GM12878 (cell line): ENCODE measurements at regions of chr11 and their contacts with region 1.

Region 1: GRCh38 chr11:60265373-60266214 is 14.9 kb upstream of the MS4A4A start:
- DNase-seq: peak; percentile 44
- ATAC-seq: peak; percentile 76
- H3K4me3 ChIP-seq: no peak overlapping the region
- H3K27ac ChIP-seq: no peak overlapping the region
- H3K4me1 ChIP-seq: no peaks in the 10 kb centered on the region
- H3K27me3 ChIP-seq: no peaks in the 10 kb centered on the region
- CTCF ChIP-seq: peak; percentile 49 to 80 (median 74); a peak in 5 of 6 replicates
- EP300 ChIP-seq: no peak
- POLR2A ChIP-seq: no peak
- RAD21 ChIP-seq: peak; percentile 96

Region 2: DNA sequence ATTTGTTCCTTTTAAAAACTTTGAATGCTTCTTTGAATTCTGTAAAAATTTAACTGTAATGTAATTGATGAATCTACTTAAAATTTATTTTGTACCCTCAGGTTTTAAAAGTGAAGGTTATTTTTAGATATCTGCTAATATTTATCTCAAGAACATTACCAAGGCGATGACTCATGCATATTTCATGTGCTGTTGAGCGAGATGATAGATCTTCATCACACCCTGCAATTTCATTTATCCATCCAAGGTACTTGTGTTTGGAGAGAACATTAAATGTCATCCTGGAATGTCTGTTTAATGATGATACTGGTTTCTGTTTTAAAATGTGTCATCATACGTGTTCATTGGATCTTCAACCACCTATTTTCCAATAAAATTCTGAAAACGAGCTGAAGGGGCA is 308.5 kb before region 1 on chr11:
- CTCF ChIA-PET with region 1: no interaction called
- POLR2A ChIA-PET with region 1: no interaction called
- RAD21 ChIA-PET with region 1: no interaction called
- SMC1A ChIA-PET with region 1: no interaction called
- in situ Hi-C with region 1: no loop called
- intact Hi-C with region 1: no loop called
- DNase-seq: no peak
- ATAC-seq: no peak
- H3K4me3 ChIP-seq: no peak overlapping the region
- H3K27ac ChIP-seq: no peak overlapping the region
- H3K4me1 ChIP-seq: no peaks in the 10 kb centered on the region
- H3K27me3 ChIP-seq: no peaks in the 10 kb centered on the region
- CTCF ChIP-seq: no peak
- EP300 ChIP-seq: no peak
- POLR2A ChIP-seq: no peak
- RAD21 ChIP-seq: no peak

Region 3: GRCh38 chr11:60303661-60304060 is 38.1 kb after region 1 on chr11:
- CTCF ChIA-PET with region 1: interaction called, 16 read pairs
- POLR2A ChIA-PET with region 1: no interaction called
- RAD21 ChIA-PET with region 1: interaction called, 11 read pairs
- SMC1A ChIA-PET with region 1: interaction called, 11 read pairs
- in situ Hi-C with region 1: no loop called
- intact Hi-C with region 1: no loop called
- DNase-seq: no peak
- ATAC-seq: no peak
- H3K4me3 ChIP-seq: no peak overlapping the region
- H3K27ac ChIP-seq: no peak overlapping the region
- H3K4me1 ChIP-seq: peaks cover 2% of the 10 kb centered on the region; the same call in 1 of the 2 replicates
- H3K27me3 ChIP-seq: no peaks in the 10 kb centered on the region
- CTCF ChIP-seq: no peak
- EP300 ChIP-seq: no peak
- POLR2A ChIP-seq: no peak
- RAD21 ChIP-seq: no peak

Region 4: DNA sequence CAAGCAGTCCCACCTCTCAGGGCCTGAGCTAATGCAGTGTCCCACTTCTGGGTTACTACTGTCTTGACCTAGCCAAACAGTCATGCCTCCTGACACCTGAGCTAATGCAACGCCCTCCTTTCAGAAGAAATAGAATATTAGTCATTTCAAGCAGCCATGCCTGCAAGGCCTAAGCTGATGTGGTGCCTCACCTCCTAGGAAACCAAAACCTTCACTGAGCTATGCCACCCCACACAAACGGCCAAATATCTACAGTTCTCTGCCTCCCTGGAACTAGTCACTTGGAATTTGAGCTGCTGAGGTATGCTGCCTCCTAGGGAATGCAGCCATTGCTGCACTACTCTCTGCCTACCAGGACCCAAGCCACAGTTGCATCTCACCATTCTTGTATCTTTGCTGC is 53.1 kb after region 1 on chr11:
- CTCF ChIA-PET with region 1: interaction called, 6 read pairs
- POLR2A ChIA-PET with region 1: no interaction called
- RAD21 ChIA-PET with region 1: interaction called, 3 read pairs
- SMC1A ChIA-PET with region 1: interaction called, 17 read pairs
- in situ Hi-C with region 1: no loop called
- intact Hi-C with region 1: no loop called
- DNase-seq: no peak
- ATAC-seq: peak; percentile 73
- H3K4me3 ChIP-seq: no peak overlapping the region
- H3K27ac ChIP-seq: no peak overlapping the region
- H3K4me1 ChIP-seq: peaks cover 24% of the 10 kb centered on the region; the same call in 1 of the 2 replicates
- H3K27me3 ChIP-seq: no peaks in the 10 kb centered on the region
- CTCF ChIP-seq: no peak
- EP300 ChIP-seq: no peak
- POLR2A ChIP-seq: no peak
- RAD21 ChIP-seq: no peak

Region 5: GRCh38 chr11:60345489-60345888 is 79.9 kb after region 1 on chr11:
- CTCF ChIA-PET with region 1: interaction called, 200 read pairs
- POLR2A ChIA-PET with region 1: no interaction called
- RAD21 ChIA-PET with region 1: interaction called, 83 read pairs
- SMC1A ChIA-PET with region 1: interaction called, 116 read pairs
- in situ Hi-C with region 1: no loop called
- intact Hi-C with region 1: loop called (anchors 1 kb)
- DNase-seq: no peak
- ATAC-seq: peak; percentile 87
- H3K4me3 ChIP-seq: no peak overlapping the region
- H3K27ac ChIP-seq: no peak overlapping the region
- H3K4me1 ChIP-seq: peaks cover 11% of the 10 kb centered on the region
- H3K27me3 ChIP-seq: no peaks in the 10 kb centered on the region
- CTCF ChIP-seq: peak; percentile 63 to 68 (median 66)
- EP300 ChIP-seq: no peak
- POLR2A ChIP-seq: no peak
- RAD21 ChIP-seq: peak; percentile 64

Region 6: GRCh38 chr11:60485986-60486385 is 220.4 kb after region 1 on chr11:
- CTCF ChIA-PET with region 1: interaction called, 21 read pairs
- POLR2A ChIA-PET with region 1: no interaction called
- RAD21 ChIA-PET with region 1: interaction called, 8 read pairs
- SMC1A ChIA-PET with region 1: interaction called, 13 read pairs
- in situ Hi-C with region 1: loop called (anchors 5 kb)
- intact Hi-C with region 1: loop called (anchors 1 kb)
- DNase-seq: peak; percentile 86
- ATAC-seq: peak; percentile 100
- H3K4me3 ChIP-seq: no peak overlapping the region
- H3K27ac ChIP-seq: no peak overlapping the region
- H3K4me1 ChIP-seq: peaks cover 9% of the 10 kb centered on the region
- H3K27me3 ChIP-seq: no peaks in the 10 kb centered on the region
- CTCF ChIP-seq: peak; percentile 91 to 100 (median 99); a peak in 5 of 6 replicates
- EP300 ChIP-seq: no peak
- POLR2A ChIP-seq: no peak
- RAD21 ChIP-seq: peak; percentile 93

Region 7: DNA sequence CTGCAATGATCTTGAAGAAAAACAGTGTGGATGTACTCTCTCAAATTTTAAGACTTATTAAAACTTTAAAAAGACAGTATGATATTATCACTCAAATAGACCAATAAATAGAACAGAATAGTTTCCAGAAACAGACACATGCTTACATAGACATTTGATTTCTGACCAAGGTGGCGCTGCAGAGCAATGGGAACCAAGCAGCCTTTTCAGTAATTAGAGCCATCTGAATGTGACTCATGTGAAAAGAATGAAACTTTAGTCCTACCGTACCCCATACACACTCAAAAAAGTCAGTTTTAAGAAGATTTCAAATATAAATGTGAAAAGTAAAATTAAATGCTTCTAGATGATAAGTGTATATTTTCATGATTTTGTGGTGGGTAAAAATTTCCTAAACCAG is 359.7 kb after region 1 on chr11:
- CTCF ChIA-PET with region 1: interaction called, 35 read pairs
- POLR2A ChIA-PET with region 1: no interaction called
- RAD21 ChIA-PET with region 1: no interaction called
- SMC1A ChIA-PET with region 1: interaction called, 11 read pairs
- in situ Hi-C with region 1: no loop called
- intact Hi-C with region 1: loop called (anchors 5 kb)
- DNase-seq: no peak
- ATAC-seq: peak; percentile 61
- H3K4me3 ChIP-seq: no peak overlapping the region
- H3K27ac ChIP-seq: no peak overlapping the region
- H3K4me1 ChIP-seq: no peaks in the 10 kb centered on the region
- H3K27me3 ChIP-seq: no peaks in the 10 kb centered on the region
- CTCF ChIP-seq: peak; percentile 17 to 22 (median 20); a peak in 3 of 6 replicates
- EP300 ChIP-seq: no peak
- POLR2A ChIP-seq: no peak
- RAD21 ChIP-seq: no peak